ENCODE measurements at regions of chr11 and their contacts with region 1.

Region 1: GRCh38 chr11:19947537-19948114 is 212.6 kb downstream of the DBX1 start:
- DNase-seq: no peak
- ATAC-seq: no peak
- H3K4me3 ChIP-seq: no peak overlapping the region
- H3K27ac ChIP-seq: no peak overlapping the region
- H3K4me1 ChIP-seq: peaks cover 12% of the 10 kb centered on the region
- H3K27me3 ChIP-seq: no peaks in the 10 kb centered on the region
- CTCF ChIP-seq: no peak
- POLR2A ChIP-seq: no peak

Region 2: DNA sequence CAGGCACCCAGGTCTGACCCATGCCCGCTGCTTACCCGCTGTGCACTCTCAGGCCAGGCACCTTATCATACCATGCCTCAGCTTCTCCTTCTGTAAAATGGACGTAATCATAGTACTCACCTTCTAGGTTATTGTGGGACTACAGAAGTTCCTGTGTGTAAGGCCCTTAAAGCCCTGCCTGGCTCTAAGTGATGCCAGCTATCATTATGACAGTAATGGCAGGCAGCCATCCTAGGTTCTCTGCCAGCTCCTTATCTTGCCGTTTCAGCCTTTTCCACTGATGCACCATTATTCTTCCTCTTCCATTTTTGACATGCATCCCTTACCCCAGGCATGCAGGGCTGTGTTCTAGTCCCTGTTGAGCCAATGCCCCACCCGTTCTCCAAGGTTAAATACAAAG is 154.8 kb after region 1 on chr11:
- intact Hi-C with region 1: loop called (anchors 10 kb)
- DNase-seq: no peak
- ATAC-seq: no peak
- H3K4me3 ChIP-seq: no peak overlapping the region
- H3K27ac ChIP-seq: no peak overlapping the region
- H3K4me1 ChIP-seq: no peaks in the 10 kb centered on the region
- H3K27me3 ChIP-seq: no peaks in the 10 kb centered on the region
- CTCF ChIP-seq: no peak
- POLR2A ChIP-seq: no peak

Region 3: GRCh38 chr11:20127671-20128527 is 180.3 kb after region 1 on chr11:
- intact Hi-C with region 1: loop called (anchors 5 kb)
- DNase-seq: peak; percentile 75 to 84 (median 81)
- ATAC-seq: peak; percentile 78
- H3K4me3 ChIP-seq: no peak overlapping the region
- H3K27ac ChIP-seq: no peak overlapping the region
- H3K4me1 ChIP-seq: peaks cover 7% of the 10 kb centered on the region
- H3K27me3 ChIP-seq: no peaks in the 10 kb centered on the region
- CTCF ChIP-seq: peak; percentile 41 to 85 (median 83)
- POLR2A ChIP-seq: no peak

Measured in body of pancreas (tissue), 4 donors.